B cell (primary cell): ENCODE measurements at regions of chr3 and their contacts with region 1.

Region 1: GRCh38 chr3:122679085-122679881 is 1.4 kb upstream of the PARP14 start:
- DNase-seq: peak; percentile 87
- ATAC-seq: peak; percentile 38
- H3K4me3 ChIP-seq: peak overlapping the region; percentile 50 to 96 (median 84)
- H3K4me3 Mint-ChIP-seq: peak overlapping the region; percentile 90
- H3K27ac ChIP-seq: peak overlapping the region; percentile 97 to 98
- H3K27ac Mint-ChIP-seq: peak overlapping the region; percentile 92
- H3K4me1 ChIP-seq: peaks cover 48 to 59% of the 10 kb centered on the region in 2 donors
- H3K4me1 Mint-ChIP-seq: peaks cover 61% of the 10 kb centered on the region
- H3K27me3 ChIP-seq: no peaks in the 10 kb centered on the region
- H3K27me3 Mint-ChIP-seq: no peaks in the 10 kb centered on the region
- CTCF ChIP-seq: peak; percentile 77

Region 2: DNA sequence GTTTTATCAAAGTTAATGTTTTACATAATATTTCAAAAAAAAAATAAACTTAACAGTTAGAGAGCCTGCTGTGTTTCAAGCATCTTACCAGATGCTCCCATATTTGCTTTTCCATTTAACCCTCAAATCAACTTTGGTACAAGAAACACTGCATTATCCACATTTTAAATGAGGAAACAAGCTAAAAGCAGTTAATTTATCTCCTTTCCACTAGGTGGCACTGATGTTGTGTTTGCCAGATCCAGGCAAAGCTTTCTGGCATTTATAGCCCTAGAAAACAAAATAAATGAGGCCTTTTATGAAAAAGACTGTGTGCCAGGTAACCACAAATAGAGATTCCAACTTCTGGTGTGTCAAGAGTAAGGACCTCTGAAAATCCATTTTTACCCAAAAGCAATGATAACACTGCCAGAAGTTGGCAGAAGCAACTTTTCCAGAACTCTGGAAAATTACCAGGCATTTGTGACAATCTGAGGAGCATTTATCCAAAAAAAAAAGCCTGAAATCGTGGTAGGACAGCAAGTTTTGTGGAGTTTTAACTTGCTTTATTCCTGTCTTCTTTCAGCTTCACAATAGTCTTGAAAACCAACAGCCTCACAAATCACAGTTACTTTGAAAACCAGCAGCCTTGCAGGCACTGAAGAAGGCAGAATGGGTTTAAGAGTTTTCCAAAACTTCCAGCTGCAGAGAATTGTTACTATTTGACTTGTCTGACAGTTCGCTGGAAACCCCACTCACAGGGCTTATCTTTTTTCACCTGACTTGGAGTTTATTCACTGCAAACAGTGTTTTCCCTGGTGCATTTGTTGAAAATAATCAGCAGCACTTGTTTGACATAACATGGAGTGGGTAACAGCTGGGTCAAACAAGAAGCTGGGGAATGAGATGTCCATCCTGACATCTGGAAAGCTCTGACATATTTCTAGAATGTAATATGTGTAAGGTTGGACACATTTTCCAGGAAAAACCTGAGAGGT is 286.1 kb before region 1 on chr3:
- CTCF ChIA-PET with region 1: interaction called, 6 read pairs
- POLR2A ChIA-PET with region 1: no interaction called
- intact Hi-C with region 1: loop called (anchors 1 kb)
- DNase-seq: peak; percentile 66
- ATAC-seq: no peak
- H3K4me3 ChIP-seq: no peak overlapping the region
- H3K4me3 Mint-ChIP-seq: no peak overlapping the region
- H3K27ac ChIP-seq: no peak overlapping the region
- H3K27ac Mint-ChIP-seq: no peak overlapping the region
- H3K4me1 ChIP-seq: no peaks in the 10 kb centered on the region
- H3K4me1 Mint-ChIP-seq: peaks cover 13% of the 10 kb centered on the region
- H3K27me3 ChIP-seq: no peaks in the 10 kb centered on the region
- H3K27me3 Mint-ChIP-seq: no peaks in the 10 kb centered on the region
- CTCF ChIP-seq: peak; percentile 94

Region 3: GRCh38 chr3:122564155-122564912 is 114.9 kb before region 1 on chr3 and contains the starts of genes DTX3L and PARP9:
- CTCF ChIA-PET with region 1: interaction called, 293 read pairs
- POLR2A ChIA-PET with region 1: interaction called, 27 read pairs
- intact Hi-C with region 1: loop called (anchors 1 kb)
- DNase-seq: peak; percentile 84
- ATAC-seq: peak; percentile 84
- H3K4me3 ChIP-seq: peak within 1 kb of the TSS; percentile 63 to 95 (median 89)
- H3K4me3 Mint-ChIP-seq: peak within 1 kb of the TSS; percentile 92
- H3K27ac ChIP-seq: peak within 1 kb of the TSS; percentile 91 to 92
- H3K27ac Mint-ChIP-seq: peak within 1 kb of the TSS; percentile 95
- H3K4me1 ChIP-seq: peaks cover 59 to 69% of the 10 kb centered on the region in 2 donors
- H3K4me1 Mint-ChIP-seq: peaks cover 77% of the 10 kb centered on the region
- H3K27me3 ChIP-seq: no peaks in the 10 kb centered on the region
- H3K27me3 Mint-ChIP-seq: no peaks in the 10 kb centered on the region
- CTCF ChIP-seq: no peak
- total RNA-seq, gene DTX3L: 41.1 and 44.0 TPM in 2 replicates
- total RNA-seq, gene PARP9: 29.8 and 31.2 TPM in 2 replicates

Region 4: GRCh38 chr3:122642935-122643334 is 36.3 kb before region 1 on chr3:
- CTCF ChIA-PET with region 1: interaction called, 4 read pairs
- POLR2A ChIA-PET with region 1: no interaction called
- intact Hi-C with region 1: loop called (anchors 5 kb)
- DNase-seq: no peak
- ATAC-seq: no peak
- H3K4me3 ChIP-seq: no peak overlapping the region
- H3K4me3 Mint-ChIP-seq: no peak overlapping the region
- H3K27ac ChIP-seq: no peak overlapping the region
- H3K27ac Mint-ChIP-seq: no peak overlapping the region
- H3K4me1 ChIP-seq: peaks cover 7 to 15% of the 10 kb centered on the region in 2 donors
- H3K4me1 Mint-ChIP-seq: peaks cover 21% of the 10 kb centered on the region
- H3K27me3 ChIP-seq: no peaks in the 10 kb centered on the region
- H3K27me3 Mint-ChIP-seq: no peaks in the 10 kb centered on the region
- CTCF ChIP-seq: no peak

Region 5: GRCh38 chr3:122697952-122698620 is 18.8 kb after region 1 on chr3:
- CTCF ChIA-PET with region 1: interaction called, 57 read pairs
- POLR2A ChIA-PET with region 1: interaction called, 9 read pairs
- intact Hi-C with region 1: loop called (anchors 1 kb)
- DNase-seq: peak; percentile 89
- ATAC-seq: peak; percentile 96
- H3K4me3 ChIP-seq: peak overlapping the region in 1 of 5 experiments; percentile 48
- H3K4me3 Mint-ChIP-seq: peak overlapping the region; percentile 59
- H3K27ac ChIP-seq: peak overlapping the region; percentile 84 to 95
- H3K27ac Mint-ChIP-seq: peak overlapping the region; percentile 88
- H3K4me1 ChIP-seq: peaks cover 78 to 83% of the 10 kb centered on the region in 2 donors
- H3K4me1 Mint-ChIP-seq: peaks cover 85% of the 10 kb centered on the region
- H3K27me3 ChIP-seq: no peaks in the 10 kb centered on the region
- H3K27me3 Mint-ChIP-seq: no peaks in the 10 kb centered on the region
- CTCF ChIP-seq: no peak

Region 6: GRCh38 chr3:122916580-122916979 is 237.3 kb after region 1 on chr3:
- CTCF ChIA-PET with region 1: no interaction called
- POLR2A ChIA-PET with region 1: no interaction called
- intact Hi-C with region 1: no loop called
- DNase-seq: no peak
- ATAC-seq: no peak
- H3K4me3 ChIP-seq: no peak overlapping the region
- H3K4me3 Mint-ChIP-seq: no peak overlapping the region
- H3K27ac ChIP-seq: no peak overlapping the region
- H3K27ac Mint-ChIP-seq: no peak overlapping the region
- H3K4me1 ChIP-seq: peaks cover 20 to 22% of the 10 kb centered on the region in 2 donors
- H3K4me1 Mint-ChIP-seq: peaks cover 24% of the 10 kb centered on the region
- H3K27me3 ChIP-seq: peaks cover 0 to 29% (median 5%) of the 10 kb centered on the region in 4 experiments
- H3K27me3 Mint-ChIP-seq: peaks cover 19% of the 10 kb centered on the region
- CTCF ChIP-seq: no peak

Region 7: GRCh38 chr3:123201566-123202427 is 522.5 kb after region 1 on chr3 and contains the start of gene SEC22A:
- CTCF ChIA-PET with region 1: no interaction called
- POLR2A ChIA-PET with region 1: no interaction called
- intact Hi-C with region 1: loop called (anchors 2 kb)
- DNase-seq: peak; percentile 95
- ATAC-seq: peak; percentile 96
- H3K4me3 ChIP-seq: peak within 1 kb of the TSS; percentile 86 to 99 (median 90)
- H3K4me3 Mint-ChIP-seq: peak within 1 kb of the TSS; percentile 95
- H3K27ac ChIP-seq: peak within 1 kb of the TSS; percentile 92 to 96
- H3K27ac Mint-ChIP-seq: peak within 1 kb of the TSS; percentile 94
- H3K4me1 ChIP-seq: peaks cover 13 to 18% of the 10 kb centered on the region in 2 donors
- H3K4me1 Mint-ChIP-seq: peaks cover 22% of the 10 kb centered on the region
- H3K27me3 ChIP-seq: no peaks in the 10 kb centered on the region
- H3K27me3 Mint-ChIP-seq: no peaks in the 10 kb centered on the region
- CTCF ChIP-seq: no peak
- total RNA-seq, gene SEC22A: 16.1 and 19.3 TPM in 2 replicates